Dorsolateral prefrontal cortex (tissue), 120 donors: ENCODE measurements at regions of chr6 and their contacts with region 1.

Region 1: GRCh38 chr6:50791900-50792508 is 26.7 kb upstream of the TFAP2B start:
- DNase-seq: no peak
- H3K4me3 ChIP-seq: no peak overlapping the region
- H3K27ac ChIP-seq: no peak overlapping the region
- H3K27me3 ChIP-seq: peaks cover 0 to 64% (median 9%) of the 10 kb centered on the region in 45 donors
- CTCF ChIP-seq: peak; percentile 49 to 86 (median 74)

Region 2: GRCh38 chr6:50135968-50136367 is 656.0 kb before region 1 on chr6:
- intact Hi-C with region 1: loop called in 1 of 2 experiments (anchors 10 kb)
- DNase-seq: no peak
- H3K4me3 ChIP-seq: no peak overlapping the region
- H3K27ac ChIP-seq: no peak overlapping the region
- H3K27me3 ChIP-seq: peaks cover 0 to 11% (median 0%) of the 10 kb centered on the region in 45 donors
- CTCF ChIP-seq: no peak

Region 3: DNA sequence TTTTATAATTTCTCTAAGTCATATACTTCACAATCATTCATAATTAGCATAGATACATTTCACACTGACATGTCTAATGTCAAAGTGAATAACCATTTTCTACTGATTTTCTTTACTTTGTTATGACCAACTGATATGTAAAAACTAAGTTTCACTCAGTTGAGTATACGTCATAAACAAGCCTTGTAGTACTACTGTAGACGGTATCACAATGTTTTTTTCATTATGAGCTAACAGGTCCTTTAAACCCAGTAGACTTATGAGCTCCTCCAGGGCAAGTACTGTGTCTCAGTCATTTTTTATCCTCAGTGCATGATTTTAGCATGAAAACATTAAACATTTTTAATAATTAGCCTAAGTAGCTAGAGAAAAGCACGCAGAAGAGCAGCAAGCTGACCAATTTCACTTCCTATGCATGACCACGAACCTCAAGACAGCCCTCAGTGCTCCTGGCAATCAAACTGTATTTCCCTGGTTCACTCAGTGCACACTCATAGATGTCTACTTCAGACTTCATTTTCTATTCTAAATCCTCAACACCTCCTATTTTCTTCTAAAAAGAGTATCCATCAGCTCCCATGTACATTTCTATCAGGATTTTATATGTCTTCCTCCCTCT is 110.7 kb before region 1 on chr6:
- intact Hi-C with region 1: no loop called
- DNase-seq: no peak
- H3K4me3 ChIP-seq: no peak overlapping the region
- H3K27ac ChIP-seq: no peak overlapping the region
- H3K27me3 ChIP-seq: peaks cover 0 to 9% (median 0%) of the 10 kb centered on the region in 45 donors
- CTCF ChIP-seq: no peak